ENCODE measurements at regions of chr2 and their contacts with region 1.

Region 1: DNA sequence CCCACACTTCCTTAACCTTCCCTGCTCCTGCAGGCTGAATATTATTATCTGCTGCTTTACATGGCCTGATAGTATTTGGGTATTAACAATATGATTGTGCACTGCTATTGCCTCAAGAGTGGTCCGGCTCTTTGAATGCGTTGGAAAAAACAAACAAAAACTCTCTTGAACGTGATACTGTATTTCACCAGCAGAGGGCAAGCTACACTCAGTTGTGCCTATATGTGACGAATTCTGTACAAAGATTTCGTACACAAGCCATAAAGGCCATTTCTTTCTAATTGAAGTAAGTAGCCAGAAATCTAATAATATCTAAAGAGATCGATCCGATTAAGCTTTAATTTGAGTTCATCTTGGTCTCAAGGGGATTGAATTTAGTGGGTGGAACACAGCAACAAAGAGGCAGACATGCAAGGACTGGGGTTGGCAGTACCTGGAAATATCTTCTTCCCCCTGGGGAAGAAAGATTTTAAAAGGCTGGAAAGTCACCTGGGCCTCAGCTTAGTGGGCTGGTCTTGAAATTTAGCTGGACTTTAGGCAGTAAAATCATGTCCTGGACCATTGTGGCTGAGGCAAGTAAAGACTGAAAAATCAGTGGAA is 49.3 kb upstream of the RAB6D start:
- DNase-seq: peak; percentile 48
- CTCF ChIP-seq: peak; percentile 70

Region 2: GRCh38 chr2:130819603-130820278 is 593.5 kb before region 1 on chr2:
- in situ Hi-C with region 1: no loop called
- DNase-seq: no peak
- CTCF ChIP-seq: no peak

Region 3: DNA sequence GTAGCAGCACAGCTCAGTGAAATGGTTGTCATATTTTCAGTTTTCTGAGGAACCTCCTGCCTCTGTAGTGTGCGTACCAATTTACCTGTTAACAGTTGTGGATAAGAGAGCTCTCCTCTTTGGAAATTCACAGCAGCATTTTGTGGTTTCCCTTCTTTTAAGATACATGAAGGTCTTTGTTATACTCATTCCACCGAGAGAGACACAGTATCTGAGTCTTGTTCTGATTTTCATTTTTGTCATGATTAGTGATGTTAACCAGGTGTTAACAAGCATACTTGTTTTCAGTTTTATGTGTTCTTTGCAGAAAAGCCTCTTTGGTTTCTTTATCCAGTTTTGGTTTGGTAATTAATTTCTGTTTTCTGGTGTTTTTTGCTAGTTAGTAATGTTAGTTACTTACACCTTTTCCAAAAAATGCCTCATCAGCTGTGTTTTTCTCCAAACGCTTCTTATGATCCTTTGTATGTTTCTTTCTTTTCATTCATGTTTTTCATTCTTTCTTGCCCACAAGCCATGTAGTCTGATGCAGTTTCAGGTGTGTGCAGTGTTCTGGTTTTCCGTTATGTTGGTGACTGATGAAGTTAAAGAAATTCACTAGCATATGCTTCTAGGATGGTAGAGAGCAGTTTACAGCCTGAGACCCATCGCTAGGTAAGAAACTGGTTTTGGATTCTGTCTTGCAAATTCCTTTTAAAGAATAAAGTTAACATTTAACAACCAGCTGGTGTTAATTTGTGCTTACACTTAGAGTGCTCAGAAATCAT is 144.5 kb after region 1 on chr2:
- in situ Hi-C with region 1: no loop called
- DNase-seq: no peak
- CTCF ChIP-seq: no peak

Region 4: DNA sequence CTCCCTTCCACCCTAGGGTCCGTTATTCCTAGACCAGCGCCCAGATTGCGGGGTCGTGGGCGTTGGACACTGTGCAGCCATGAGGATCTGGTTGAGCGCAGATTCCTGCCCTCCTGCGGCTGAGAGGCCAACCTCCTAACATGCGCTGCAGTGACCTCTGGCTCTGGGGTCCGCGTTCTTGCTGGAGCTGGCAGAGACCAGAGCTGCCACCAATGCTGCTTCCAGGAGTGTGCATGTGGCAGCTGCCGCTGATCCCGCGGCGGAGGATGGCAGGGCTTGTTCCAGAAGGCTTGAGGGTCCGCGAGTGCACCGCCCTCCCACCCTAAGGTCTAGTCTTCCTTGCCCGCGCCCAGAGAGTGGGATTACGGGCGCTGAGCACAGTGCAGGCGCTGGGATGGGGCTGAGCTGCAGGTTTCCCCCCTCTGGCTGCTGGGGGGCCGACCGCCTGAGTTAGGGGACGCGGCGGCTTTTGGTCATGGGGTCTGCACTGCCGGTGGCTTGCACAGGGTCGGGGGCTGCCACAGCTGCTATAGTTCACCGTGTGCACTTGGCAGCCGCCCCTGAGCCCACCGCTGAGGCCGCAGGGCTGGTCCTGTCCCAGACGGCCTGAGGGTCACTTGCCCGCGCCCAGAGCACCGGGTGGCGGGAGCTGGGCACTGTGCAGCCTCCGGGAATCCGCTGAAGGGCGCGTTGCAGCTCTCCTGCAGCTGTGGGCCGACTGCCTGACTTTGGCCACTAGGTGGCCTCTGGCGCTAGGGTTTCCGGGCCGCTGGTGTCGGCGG is 260.3 kb after region 1 on chr2:
- in situ Hi-C with region 1: loop called (anchors 10 kb)
- DNase-seq: peak; percentile 72
- CTCF ChIP-seq: peak; percentile 98

Measured in GM13977 (cell line).